CD8-positive, alpha-beta T cell (primary cell): ENCODE measurements at regions of chr1 and their contacts with region 1.

Region 1: DNA sequence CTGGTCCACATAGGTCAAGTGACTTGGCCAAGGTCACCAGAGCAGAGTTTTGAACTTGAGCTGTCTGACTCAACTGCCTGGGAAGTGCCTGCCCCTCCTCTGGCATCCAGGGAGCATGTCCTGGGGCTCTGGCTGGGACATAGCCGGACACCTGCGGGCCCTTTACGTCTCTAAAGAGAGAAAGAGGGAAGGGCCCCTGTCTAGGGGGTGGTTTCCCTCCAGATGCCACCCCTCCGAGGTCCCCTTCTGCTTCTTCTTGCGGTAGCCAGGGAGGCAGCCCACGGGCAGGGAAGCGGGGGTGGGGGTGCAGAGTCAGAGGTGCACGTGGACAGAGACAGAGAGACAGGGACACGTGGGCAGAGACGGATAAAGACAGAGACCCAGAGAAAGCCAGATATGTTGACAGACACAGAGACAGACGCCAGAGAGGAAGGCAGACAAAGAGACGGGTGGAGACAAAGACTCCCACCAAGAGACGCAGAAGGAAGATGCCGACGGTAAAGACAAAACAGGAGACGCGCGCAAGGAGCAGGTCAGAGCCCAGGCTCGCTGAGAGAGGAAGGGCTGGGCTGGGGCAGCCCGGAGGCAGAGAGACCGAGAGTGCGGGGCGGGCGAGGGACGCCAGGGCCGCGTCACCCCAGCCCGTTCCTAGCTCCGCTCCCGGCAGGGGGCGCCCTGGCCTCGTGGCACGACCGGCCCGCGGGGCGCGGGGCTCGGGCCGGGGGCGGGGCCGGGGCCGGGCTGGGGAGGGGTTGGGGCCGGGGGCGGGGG is 458 bp upstream of the ALPL start:
- DNase-seq: peak; percentile 23 to 67 (median 57)
- ATAC-seq: peak; percentile 86
- H3K4me3 ChIP-seq: peak overlapping the region in 1 of 2 experiments; percentile 5
- H3K4me3 Mint-ChIP-seq: peak overlapping the region; percentile 72
- H3K27ac ChIP-seq: no peak overlapping the region
- H3K27ac Mint-ChIP-seq: no peak overlapping the region
- H3K4me1 ChIP-seq: peaks cover 6% of the 10 kb centered on the region
- H3K4me1 Mint-ChIP-seq: peaks cover 13% of the 10 kb centered on the region
- H3K27me3 ChIP-seq: peaks cover 16 to 17% of the 10 kb centered on the region in 2 experiments
- H3K27me3 Mint-ChIP-seq: peaks cover 53% of the 10 kb centered on the region
- CTCF ChIP-seq: no peak

Region 2: DNA sequence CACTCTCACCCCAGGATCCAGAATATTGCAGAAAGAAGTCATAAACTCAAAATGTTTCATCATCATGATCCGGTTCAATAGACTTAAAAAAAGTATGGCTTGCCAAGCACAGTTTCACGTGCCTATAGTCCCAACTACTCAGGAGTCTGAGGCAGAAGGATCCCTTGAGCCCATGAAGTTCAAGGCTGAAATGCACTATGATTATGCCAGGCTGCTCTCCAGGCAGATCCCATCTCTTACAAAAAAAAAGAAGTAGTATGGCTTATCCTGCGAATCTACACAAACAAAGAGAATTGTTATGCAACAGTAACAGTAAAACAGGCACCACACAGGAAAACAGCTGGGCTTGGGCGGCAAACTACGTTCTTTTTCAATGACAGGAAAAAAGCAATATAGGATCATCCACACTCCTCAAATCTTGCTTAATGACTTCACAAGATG is 408.3 kb before region 1 on chr1:
- CTCF ChIA-PET with region 1: no interaction called
- POLR2A ChIA-PET with region 1: no interaction called
- intact Hi-C with region 1: no loop called
- DNase-seq: no peak
- ATAC-seq: no peak
- H3K4me3 ChIP-seq: no peak overlapping the region
- H3K4me3 Mint-ChIP-seq: no peak overlapping the region
- H3K27ac ChIP-seq: no peak overlapping the region
- H3K27ac Mint-ChIP-seq: no peak overlapping the region
- H3K4me1 ChIP-seq: no peaks in the 10 kb centered on the region
- H3K4me1 Mint-ChIP-seq: no peaks in the 10 kb centered on the region
- H3K27me3 ChIP-seq: no peaks in the 10 kb centered on the region
- H3K27me3 Mint-ChIP-seq: no peaks in the 10 kb centered on the region
- CTCF ChIP-seq: no peak

Region 3: GRCh38 chr1:21344750-21345443 is 163.9 kb before region 1 on chr1:
- CTCF ChIA-PET with region 1: no interaction called
- POLR2A ChIA-PET with region 1: no interaction called
- intact Hi-C with region 1: no loop called
- DNase-seq: peak in 3 of 9 experiments; percentile 25 to 54 (median 30)
- ATAC-seq: peak; percentile 28
- H3K4me3 ChIP-seq: peak overlapping the region; percentile 75 to 94
- H3K4me3 Mint-ChIP-seq: peak overlapping the region; percentile 86
- H3K27ac ChIP-seq: peak overlapping the region in 1 of 2 experiments; percentile 55
- H3K27ac Mint-ChIP-seq: peak overlapping the region; percentile 76
- H3K4me1 ChIP-seq: peaks cover 53% of the 10 kb centered on the region
- H3K4me1 Mint-ChIP-seq: peaks cover 40% of the 10 kb centered on the region
- H3K27me3 ChIP-seq: peaks cover 0 to 8% of the 10 kb centered on the region in 2 experiments
- H3K27me3 Mint-ChIP-seq: no peaks in the 10 kb centered on the region
- CTCF ChIP-seq: no peak

Region 4: DNA sequence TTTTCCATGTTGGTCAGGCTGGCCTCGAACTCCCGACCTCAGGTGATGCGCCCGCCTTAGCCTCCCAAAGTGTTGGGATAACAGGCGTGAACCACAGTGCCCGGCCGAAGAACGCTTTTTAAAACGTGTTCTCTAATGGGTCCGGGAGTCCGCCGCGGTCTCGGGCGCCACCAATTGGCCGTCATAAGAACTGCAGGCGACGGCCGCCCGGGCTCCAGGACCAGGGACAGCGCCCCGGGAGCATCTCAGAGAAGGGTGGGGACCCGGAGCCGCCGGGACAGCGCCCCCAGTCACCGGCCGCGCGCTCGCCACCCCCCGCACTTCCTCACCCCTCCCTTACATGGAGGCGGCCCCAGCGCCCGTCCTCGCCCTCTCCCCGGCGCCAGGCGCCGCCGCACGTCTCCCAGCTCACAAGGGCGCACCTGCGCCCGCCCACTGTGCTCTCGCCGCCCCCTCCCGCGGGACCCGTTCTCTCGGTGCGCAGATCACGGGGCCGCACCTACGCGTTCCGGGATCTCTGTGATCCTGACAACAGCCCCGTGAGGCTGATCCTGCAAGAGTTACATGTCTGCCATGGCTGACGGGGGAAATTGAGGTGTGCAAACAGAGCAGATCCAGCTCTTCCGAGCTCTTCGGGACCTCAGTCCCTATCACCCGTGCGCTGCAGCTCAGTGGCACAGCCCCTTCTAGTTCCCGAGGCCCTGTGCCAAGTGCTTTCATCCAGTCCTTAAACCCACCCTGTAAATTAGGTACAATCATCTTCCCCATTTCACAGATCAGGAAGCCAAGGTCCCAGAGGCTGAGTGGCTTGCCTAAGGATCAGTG is 150.5 kb after region 1 on chr1:
- CTCF ChIA-PET with region 1: no interaction called
- POLR2A ChIA-PET with region 1: no interaction called
- intact Hi-C with region 1: loop called (anchors 2 to 5 kb)
- DNase-seq: peak; percentile 65 to 90 (median 84)
- ATAC-seq: peak; percentile 99
- H3K4me3 ChIP-seq: peak overlapping the region; percentile 8 to 10
- H3K4me3 Mint-ChIP-seq: peak overlapping the region; percentile 32
- H3K27ac ChIP-seq: no peak overlapping the region
- H3K27ac Mint-ChIP-seq: no peak overlapping the region
- H3K4me1 ChIP-seq: peaks cover 8% of the 10 kb centered on the region
- H3K4me1 Mint-ChIP-seq: peaks cover 5% of the 10 kb centered on the region
- H3K27me3 ChIP-seq: peaks cover 5 to 10% of the 10 kb centered on the region in 2 experiments
- H3K27me3 Mint-ChIP-seq: peaks cover 17% of the 10 kb centered on the region
- CTCF ChIP-seq: peak; percentile 93

Region 5: GRCh38 chr1:22641906-22642636 is 1133.3 kb after region 1 on chr1:
- CTCF ChIA-PET with region 1: interaction called, 3 read pairs
- POLR2A ChIA-PET with region 1: no interaction called
- intact Hi-C with region 1: loop called in 1 of 2 experiments (anchors 5 kb)
- DNase-seq: peak; percentile 42 to 79 (median 66)
- ATAC-seq: peak; percentile 57
- H3K4me3 ChIP-seq: no peak overlapping the region
- H3K4me3 Mint-ChIP-seq: no peak overlapping the region
- H3K27ac ChIP-seq: no peak overlapping the region
- H3K27ac Mint-ChIP-seq: no peak overlapping the region
- H3K4me1 ChIP-seq: no peaks in the 10 kb centered on the region
- H3K4me1 Mint-ChIP-seq: no peaks in the 10 kb centered on the region
- H3K27me3 ChIP-seq: peaks cover 0 to 11% of the 10 kb centered on the region in 2 experiments
- H3K27me3 Mint-ChIP-seq: peaks cover 19% of the 10 kb centered on the region
- CTCF ChIP-seq: peak; percentile 59